ENCODE measurements at regions of chr3 and their contacts with region 1.

Region 1: DNA sequence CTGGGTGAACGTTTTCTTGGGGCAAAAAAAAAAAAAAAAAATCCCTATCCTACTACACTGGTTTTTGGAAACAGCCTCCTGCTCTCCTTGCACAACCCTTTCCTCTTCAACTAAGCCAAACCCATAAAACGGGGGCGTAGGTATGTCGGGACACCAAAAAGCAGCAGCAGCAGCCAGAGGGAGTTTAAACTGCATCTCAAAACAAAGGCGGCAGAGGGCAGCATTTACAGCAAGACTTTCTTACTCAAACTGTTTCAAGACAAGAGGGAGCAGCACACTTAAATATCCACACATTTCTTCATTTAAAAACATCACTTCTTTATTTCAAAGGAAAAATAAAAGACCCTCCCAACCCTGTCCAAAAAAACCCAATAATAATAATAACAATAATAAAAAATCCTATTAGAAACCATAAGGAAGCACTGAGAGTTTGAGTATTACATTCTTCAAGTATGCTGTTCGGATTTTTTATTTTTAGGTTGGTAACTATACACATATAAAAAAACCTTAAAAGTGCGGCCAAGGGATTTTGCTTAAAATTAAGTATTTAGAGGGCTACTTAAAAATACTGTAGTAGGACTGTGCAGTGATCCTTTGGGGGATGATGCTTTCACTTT is 43.9 kb upstream of the PLXND1 start:
- H3K4me3 ChIP-seq: no peak overlapping the region
- H3K27ac ChIP-seq: no peak overlapping the region
- H3K4me1 ChIP-seq: 0 out of 2 replicates have a peak, but pooled peaks cover 2% of the 10 kb centered on the region
- CTCF ChIP-seq: no peak

Region 2: DNA sequence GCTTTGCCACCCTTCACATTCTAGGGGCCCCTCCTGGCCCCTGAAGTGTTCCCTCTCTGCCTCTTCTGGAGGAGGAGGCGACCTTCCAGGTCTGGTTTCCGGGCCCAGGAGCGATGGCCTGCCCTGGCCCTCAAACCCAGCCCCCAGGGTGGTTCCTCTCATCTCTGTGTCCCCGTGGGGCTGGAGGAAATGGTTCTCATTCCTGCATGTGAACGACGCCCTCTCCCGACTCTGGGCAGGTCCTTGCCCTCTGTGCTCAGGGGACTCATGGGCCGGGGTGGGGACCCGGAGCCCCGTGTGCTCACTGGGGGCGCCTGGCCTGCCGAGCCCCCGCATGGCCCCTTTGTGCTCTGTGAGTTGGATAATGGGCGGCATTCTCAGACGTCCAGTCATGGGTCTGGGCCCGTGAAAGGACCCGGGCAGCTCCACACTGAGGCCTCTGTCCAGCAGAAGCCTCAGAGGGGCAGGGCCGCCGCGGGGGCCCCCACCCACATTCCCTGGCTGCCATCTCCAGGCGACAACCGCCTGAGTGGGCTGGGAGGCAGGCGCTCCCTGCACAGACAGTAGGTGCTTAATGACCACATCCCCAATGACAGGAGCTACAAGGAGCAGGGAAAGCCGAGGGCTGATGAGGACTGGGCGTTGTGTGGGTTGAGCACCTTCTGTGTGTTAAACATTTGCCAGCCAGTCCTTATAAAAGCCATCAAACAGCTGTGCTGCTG is 38.4 kb before region 1 on chr3:
- CTCF ChIA-PET with region 1: no interaction called
- POLR2A ChIA-PET with region 1: no interaction called
- H3K4me3 ChIP-seq: no peak overlapping the region
- H3K27ac ChIP-seq: no peak overlapping the region
- H3K4me1 ChIP-seq: 0 out of 2 replicates have a peak, but pooled peaks cover 3% of the 10 kb centered on the region
- CTCF ChIP-seq: no peak

Region 3: DNA sequence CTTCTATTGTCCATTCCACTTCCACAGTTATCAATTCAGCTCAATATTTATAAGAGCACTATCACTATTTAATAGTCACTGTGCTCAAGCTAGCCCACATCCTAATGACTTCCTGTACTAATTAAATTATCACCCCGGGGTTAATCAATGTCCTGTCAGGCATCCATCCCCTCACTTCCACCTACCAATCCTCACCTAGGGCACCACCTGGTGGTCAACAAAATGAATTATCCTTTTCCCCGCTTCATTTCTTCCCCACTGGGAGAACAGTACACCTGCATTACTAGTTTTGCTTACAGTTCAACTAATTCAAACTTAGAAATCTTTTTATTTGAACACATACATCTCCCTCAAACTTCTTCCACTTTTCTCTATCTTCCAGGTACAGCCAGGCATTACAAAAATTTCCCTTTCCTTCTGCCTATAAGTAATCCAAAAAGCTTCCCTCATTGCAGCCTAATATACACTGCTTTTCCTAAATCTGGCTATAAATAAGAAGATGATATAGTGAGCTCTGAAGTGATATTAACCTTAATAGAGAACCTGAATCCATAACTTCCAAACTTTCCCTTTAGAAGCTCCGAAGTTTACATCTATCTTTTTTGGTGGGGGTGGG is 174.7 kb after region 1 on chr3:
- CTCF ChIA-PET with region 1: interaction called, 34 read pairs
- POLR2A ChIA-PET with region 1: no interaction called
- H3K4me3 ChIP-seq: no peak overlapping the region
- H3K27ac ChIP-seq: no peak overlapping the region
- H3K4me1 ChIP-seq: no peaks in the 10 kb centered on the region
- CTCF ChIP-seq: peak; percentile 64

Region 4: GRCh38 chr3:129831503-129831902 is 181.1 kb after region 1 on chr3:
- CTCF ChIA-PET with region 1: interaction called, 12 read pairs
- POLR2A ChIA-PET with region 1: no interaction called
- H3K4me3 ChIP-seq: no peak overlapping the region
- H3K27ac ChIP-seq: no peak overlapping the region
- H3K4me1 ChIP-seq: peaks cover 1% of the 10 kb centered on the region; the same call in 1 of the 2 replicates
- CTCF ChIP-seq: no peak

Measured in HEK293 (cell line).